ENCODE measurements at regions of chr3 and their contacts with region 1.

Region 1: DNA sequence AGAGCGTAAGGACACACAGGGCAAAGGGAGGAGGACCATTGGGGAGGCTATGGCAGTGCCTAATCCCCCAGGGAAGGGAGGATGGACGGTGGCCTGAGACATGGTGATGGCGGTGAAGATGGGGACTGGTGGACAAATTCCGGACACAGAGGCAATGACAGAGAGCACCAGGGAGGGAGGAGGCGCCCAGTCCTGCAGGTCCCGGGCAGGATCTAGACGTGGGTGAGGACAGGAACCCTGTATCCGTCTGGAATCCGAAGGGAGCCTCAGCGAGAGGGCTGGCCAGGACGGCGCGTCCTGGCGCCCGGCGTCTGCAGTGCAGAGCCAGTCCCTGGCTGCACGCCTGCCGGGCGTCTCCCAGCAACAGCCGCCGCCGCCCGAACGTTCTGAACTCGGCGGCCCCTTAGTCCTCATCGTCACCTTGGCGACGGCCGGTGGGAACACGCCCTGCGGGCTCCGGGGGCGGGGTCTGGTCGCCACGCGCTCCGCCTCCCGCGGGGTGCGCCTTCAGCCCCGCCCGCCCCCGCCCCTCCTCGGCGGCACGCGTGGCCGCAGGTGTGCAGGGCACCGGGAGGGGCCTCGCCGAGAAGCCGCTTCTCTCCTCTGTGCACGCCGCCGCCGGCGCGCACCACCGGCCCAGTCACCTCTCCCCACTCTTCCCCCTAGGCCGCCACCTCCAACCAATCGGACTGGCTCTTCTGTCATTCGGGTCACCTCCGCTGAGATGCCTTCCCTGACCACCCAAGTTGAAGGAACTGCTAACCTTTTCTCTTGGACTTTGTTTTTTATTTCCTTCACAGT is 11.6 kb downstream of the XIRP1 start:
- DNase-seq: peak; percentile 82 to 97
- H3K4me3 ChIP-seq: peak overlapping the region; percentile 49 to 54
- H3K27ac ChIP-seq: peak overlapping the region; percentile 93 to 94
- H3K4me1 ChIP-seq: peaks cover 19 to 37% of the 10 kb centered on the region in 2 donors
- H3K27me3 ChIP-seq: no peaks in the 10 kb centered on the region
- CTCF ChIP-seq: peak; percentile 19 to 35 (median 30)

Region 2: GRCh38 chr3:39141171-39141995 is 39.4 kb before region 1 on chr3:
- intact Hi-C with region 1: loop called (anchors 10 kb)
- DNase-seq: no peak
- H3K4me3 ChIP-seq: no peak overlapping the region
- H3K27ac ChIP-seq: peak overlapping the region; percentile 20 to 32
- H3K4me1 ChIP-seq: peaks cover 23 to 36% of the 10 kb centered on the region in 2 donors
- H3K27me3 ChIP-seq: no peaks in the 10 kb centered on the region
- CTCF ChIP-seq: no peak

Region 3: DNA sequence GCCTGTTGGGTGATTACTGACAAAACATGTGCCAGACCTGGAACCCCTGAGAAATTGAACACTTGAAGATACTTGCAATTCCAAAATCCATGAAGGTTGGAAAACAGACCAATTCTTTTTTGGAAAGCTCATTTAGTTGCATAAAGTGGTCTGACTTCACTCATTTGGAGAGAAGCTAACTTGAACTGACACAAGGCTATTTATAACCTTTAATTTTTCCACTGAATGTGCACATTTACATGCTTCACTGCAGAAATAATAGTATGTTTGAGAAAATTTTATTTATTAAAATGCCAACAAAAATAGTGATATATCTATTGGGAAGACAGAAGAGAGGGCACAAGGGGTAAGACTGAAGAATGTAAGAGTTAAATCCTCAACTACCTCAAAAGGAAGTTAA is 378.8 kb after region 1 on chr3:
- intact Hi-C with region 1: no loop called
- DNase-seq: no peak
- H3K4me3 ChIP-seq: no peak overlapping the region
- H3K27ac ChIP-seq: no peak overlapping the region
- H3K4me1 ChIP-seq: no peaks in the 10 kb centered on the region
- H3K27me3 ChIP-seq: no peaks in the 10 kb centered on the region
- CTCF ChIP-seq: no peak

Measured in ascending aorta (tissue), 2 donors.